HEK293 (cell line): ENCODE measurements at regions of chr6 and their contacts with region 1.

Region 1: GRCh38 chr6:43723737-43724295 is 36.2 kb upstream of the MRPS18A start:
- H3K4me3 ChIP-seq: no peak overlapping the region
- H3K27ac ChIP-seq: no peak overlapping the region
- H3K4me1 ChIP-seq: peaks cover 10% of the 10 kb centered on the region
- CTCF ChIP-seq: peak; percentile 89

Region 2: GRCh38 chr6:43708860-43709653 is 14.8 kb before region 1 on chr6:
- CTCF ChIA-PET with region 1: interaction called, 22 read pairs
- POLR2A ChIA-PET with region 1: no interaction called
- H3K4me3 ChIP-seq: no peak overlapping the region
- H3K27ac ChIP-seq: no peak overlapping the region
- H3K4me1 ChIP-seq: peaks cover 9% of the 10 kb centered on the region
- CTCF ChIP-seq: no peak

Region 3: DNA sequence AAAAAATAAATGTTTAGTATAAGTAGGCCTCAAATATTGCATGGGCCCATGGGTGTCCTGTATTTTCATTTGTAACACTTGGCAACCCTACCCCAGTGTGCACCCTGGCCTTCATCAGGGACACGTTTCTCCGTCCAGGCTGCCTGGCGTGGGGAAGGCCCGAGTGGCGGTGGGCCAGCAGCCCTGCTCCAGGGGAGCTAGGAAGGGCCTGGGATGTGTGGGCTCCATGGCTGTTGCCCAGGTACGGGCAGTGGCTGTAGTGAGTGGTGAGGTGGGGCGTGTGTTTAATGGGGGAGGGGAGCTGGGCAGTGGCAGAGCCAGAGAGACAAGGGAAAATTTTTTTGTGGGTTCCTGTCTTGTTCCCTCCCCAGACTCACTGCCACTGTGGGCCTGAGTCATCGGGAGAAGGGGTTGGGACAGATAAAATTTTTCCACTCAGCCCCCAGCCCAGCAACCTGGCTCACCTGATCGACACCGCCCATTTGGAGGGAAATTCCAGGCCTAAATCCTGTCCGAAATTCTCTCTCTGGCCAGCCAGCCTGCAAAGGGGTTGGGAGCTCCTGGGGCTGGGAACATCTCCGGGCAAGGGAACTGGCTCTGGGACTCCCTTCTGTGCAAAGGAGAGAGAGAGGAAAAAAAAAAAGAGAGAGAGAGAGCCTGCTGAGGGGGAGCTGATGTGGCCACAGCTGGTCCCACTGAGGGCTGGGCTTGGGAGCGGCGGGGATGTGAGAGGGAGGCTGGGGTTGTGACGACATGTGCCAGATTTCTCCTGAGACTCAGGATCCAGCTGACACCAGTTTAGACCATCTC is 13.7 kb after region 1 on chr6:
- CTCF ChIA-PET with region 1: interaction called, 10 read pairs
- POLR2A ChIA-PET with region 1: interaction called, 3 read pairs
- H3K4me3 ChIP-seq: no peak overlapping the region
- H3K27ac ChIP-seq: no peak overlapping the region; the same call in 1 of the 2 replicates
- H3K4me1 ChIP-seq: no peaks in the 10 kb centered on the region
- CTCF ChIP-seq: no peak

Region 4: GRCh38 chr6:43746613-43747102 is 22.8 kb after region 1 on chr6:
- CTCF ChIA-PET with region 1: interaction called, 17 read pairs
- POLR2A ChIA-PET with region 1: no interaction called
- H3K4me3 ChIP-seq: no peak overlapping the region
- H3K27ac ChIP-seq: no peak overlapping the region
- H3K4me1 ChIP-seq: no peaks in the 10 kb centered on the region
- CTCF ChIP-seq: no peak

Region 5: GRCh38 chr6:43758617-43759050 is 34.8 kb after region 1 on chr6:
- CTCF ChIA-PET with region 1: interaction called, 17 read pairs
- POLR2A ChIA-PET with region 1: no interaction called
- H3K4me3 ChIP-seq: no peak overlapping the region
- H3K27ac ChIP-seq: no peak overlapping the region
- H3K4me1 ChIP-seq: no peaks in the 10 kb centered on the region; the same call in 1 of the 2 replicates
- CTCF ChIP-seq: peak; percentile 30; the same call in 1 of the 2 replicates

Region 6: GRCh38 chr6:44512868-44513741 is 789.3 kb after region 1 on chr6:
- CTCF ChIA-PET with region 1: no interaction called
- POLR2A ChIA-PET with region 1: no interaction called
- H3K4me3 ChIP-seq: no peak overlapping the region
- H3K27ac ChIP-seq: no peak overlapping the region
- H3K4me1 ChIP-seq: no peaks in the 10 kb centered on the region
- CTCF ChIP-seq: no peak